SK-N-SH (cell line): ENCODE measurements at regions of chr15 and their contacts with region 1.

Region 1: DNA sequence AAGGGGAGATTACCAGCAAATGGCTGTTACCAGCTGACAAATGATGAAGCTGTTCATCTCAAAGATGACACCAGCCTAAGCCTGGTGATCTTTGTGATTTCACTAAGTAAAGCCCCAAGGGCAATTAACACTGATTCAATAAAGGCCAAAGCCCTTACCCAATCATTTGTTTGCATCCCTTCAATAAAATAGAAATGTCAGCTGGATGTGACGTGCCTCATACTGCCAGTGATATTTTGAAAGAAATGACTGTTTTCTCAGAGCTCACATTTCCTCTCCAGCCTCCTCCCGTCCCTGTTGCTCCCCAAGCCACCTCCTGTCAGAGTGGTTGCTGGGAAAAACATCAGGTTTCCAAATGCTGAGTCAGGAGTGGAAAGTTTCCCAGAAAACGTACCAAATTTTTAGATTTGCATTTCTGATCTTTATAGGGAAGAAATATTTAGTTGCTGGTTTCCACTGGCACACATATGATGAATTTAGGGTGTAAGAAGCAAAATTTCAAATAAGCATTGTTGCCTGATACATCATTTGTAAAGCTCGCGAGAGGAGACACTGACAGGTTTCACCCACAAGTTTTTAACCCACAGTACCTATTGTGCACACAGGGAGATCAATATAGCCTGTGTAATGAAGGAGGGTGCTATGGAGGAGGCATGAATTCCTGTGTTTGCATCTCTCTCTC is 21.0 kb downstream of the C2CD4A start:
- DNase-seq: peak; percentile 59
- H3K4me3 ChIP-seq: no peak overlapping the region
- H3K27ac ChIP-seq: peak overlapping the region in 1 of 2 experiments; percentile 93; a peak in 2 of 4 replicates
- H3K4me1 ChIP-seq: peaks cover 3 to 18% of the 10 kb centered on the region in 2 experiments; a peak in 2 of 4 replicates
- H3K27me3 ChIP-seq: no peaks in the 10 kb centered on the region
- CTCF ChIP-seq: no peak
- EP300 ChIP-seq: peak in 1 of 2 experiments; percentile 92; a peak in 2 of 4 replicates
- RAD21 ChIP-seq: peak; percentile 3; the same call in 1 of the 2 replicates

Region 2: GRCh38 chr15:62066663-62067447 is 21.0 kb before region 1 on chr15 and contains the start of gene C2CD4A:
- CTCF ChIA-PET with region 1: interaction called, 14 read pairs
- POLR2A ChIA-PET with region 1: no interaction called
- DNase-seq: no peak
- H3K4me3 ChIP-seq: peak within 1 kb of the TSS in 1 of 2 experiments; percentile 56; a peak in 2 of 4 replicates
- H3K27ac ChIP-seq: no peak within 1 kb of the TSS
- H3K4me1 ChIP-seq: no peaks in the 10 kb centered on the region; a peak in 1 of 4 replicates
- H3K27me3 ChIP-seq: no peaks in the 10 kb centered on the region
- CTCF ChIP-seq: no peak
- EP300 ChIP-seq: no peak
- RAD21 ChIP-seq: no peak
- polyA plus RNA-seq, gene C2CD4A: not detected in 2 replicates

Region 3: DNA sequence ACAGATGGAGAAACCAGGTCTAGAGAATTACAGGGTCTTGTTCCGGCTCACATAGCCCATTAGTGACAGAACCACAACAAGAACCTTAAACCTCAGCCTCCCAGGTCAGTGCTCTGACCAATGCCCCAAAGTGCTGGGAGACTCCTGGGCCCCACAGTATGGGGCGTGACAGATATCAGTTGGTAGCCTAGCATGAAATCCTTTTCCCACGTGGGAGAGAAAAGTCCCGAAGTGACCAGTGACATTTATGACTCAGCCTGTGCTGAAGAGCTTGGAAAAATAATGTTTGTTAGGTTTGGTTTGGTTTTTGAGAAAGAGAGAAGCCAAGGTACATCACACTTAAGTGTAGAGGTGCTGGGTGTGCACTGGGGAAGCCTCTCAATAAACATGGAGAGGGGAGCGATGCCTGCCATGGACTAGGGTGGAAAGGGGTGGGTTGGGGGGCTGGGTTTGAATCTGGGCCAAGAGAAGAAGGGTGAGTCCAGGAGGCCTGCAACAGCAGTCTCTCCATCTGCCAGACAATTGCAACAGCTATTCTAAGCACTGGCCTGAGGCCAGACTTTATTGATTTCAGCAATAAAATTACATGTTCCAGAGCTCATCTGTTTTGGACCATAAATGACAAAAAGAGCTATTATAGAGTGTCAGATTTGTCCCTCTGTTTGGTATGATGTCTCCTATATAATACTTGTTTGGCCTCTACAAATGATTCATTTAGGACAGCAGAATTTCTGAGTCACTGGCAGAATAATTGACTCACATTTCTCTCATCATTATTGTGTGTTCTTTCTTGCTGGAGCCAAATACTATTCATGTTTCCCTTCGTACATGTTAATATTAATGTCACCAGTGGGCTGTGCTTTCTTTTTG is 22.4 kb after region 1 on chr15:
- CTCF ChIA-PET with region 1: interaction called, 4 read pairs
- POLR2A ChIA-PET with region 1: interaction called, 15 read pairs
- DNase-seq: peak; percentile 77
- H3K4me3 ChIP-seq: no peak overlapping the region
- H3K27ac ChIP-seq: peak overlapping the region; percentile 77 to 99
- H3K4me1 ChIP-seq: peaks cover 16 to 38% of the 10 kb centered on the region in 2 experiments
- H3K27me3 ChIP-seq: no peaks in the 10 kb centered on the region
- CTCF ChIP-seq: no peak
- EP300 ChIP-seq: peak; percentile 19 to 98; a peak in 3 of 4 replicates
- RAD21 ChIP-seq: peak; percentile 19